Mammary epithelial cell (primary cell): ENCODE measurements at regions of chr7 and their contacts with region 1.

Region 1: DNA sequence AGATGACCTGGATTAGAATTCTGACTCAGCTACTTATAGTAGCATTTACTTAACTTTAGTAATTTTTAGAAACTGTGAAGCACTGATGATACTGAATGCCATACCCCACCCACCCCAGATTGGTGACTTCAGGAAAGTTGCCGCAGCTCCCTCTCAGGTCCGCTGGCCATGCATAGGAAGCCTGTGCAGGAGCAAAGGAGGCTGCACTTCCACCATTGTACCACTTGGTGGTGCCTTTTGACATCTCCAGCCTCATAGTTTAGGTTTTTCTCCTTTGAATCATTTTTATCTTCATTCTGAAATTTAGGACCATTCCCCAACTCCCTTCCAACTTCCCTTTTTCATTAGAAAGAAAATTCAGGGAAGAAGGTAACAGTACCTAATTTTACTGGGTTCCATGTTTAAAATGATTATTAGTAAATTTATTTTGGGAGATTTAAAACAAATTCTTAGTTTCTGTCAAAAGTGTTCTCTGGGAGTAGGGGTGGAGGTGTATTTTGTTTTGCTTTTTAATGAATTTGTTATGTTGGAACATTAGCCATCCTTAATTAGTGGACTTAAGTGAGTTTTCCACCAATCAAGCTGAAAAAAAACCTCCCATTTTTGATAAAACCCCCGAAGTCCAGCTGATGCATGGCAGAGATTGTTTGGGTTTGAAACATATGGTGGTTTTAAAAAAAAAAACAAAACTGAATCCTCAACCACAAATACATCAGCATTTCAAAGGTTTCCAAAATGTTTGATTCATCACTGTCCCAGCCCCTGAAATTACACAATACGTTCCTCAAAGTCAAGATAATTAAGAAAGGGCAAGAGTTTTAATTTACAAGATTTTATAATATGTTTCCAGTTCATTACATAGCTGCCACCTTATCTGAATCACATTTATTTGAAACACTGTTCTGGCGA is 109.6 kb downstream of the WNT2 start:
- DNase-seq: peak; percentile 38
- H3K4me3 ChIP-seq: no peak overlapping the region
- H3K27ac ChIP-seq: no peak overlapping the region
- H3K4me1 ChIP-seq: no peaks in the 10 kb centered on the region
- H3K27me3 ChIP-seq: no peaks in the 10 kb centered on the region
- CTCF ChIP-seq: peak; percentile 92 to 98

Region 2: DNA sequence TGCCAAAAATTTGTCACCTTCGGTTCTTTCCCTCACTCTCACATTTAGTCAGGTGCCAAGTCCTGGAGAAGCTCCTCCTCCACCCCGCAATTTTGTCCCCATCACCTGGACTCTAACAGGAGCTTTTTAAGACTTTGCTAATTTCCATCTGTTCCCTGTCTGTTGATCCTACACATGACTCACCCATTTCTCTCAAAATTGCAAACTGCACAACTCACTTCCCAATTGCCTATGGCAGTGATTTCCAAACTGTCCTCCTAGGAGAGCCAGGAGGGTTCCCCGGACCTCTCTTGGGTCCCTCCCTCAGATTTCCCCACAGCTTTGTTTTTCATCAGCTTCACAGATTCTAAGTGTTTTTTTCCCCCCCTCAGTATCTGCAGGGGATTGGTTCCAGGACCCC is 10.7 kb before region 1 on chr7:
- CTCF ChIA-PET with region 1: no interaction called
- dilution Hi-C with region 1: no loop called
- in situ Hi-C with region 1: no loop called
- intact Hi-C with region 1: no loop called
- DNase-seq: peak; percentile 12
- H3K4me3 ChIP-seq: no peak overlapping the region
- H3K27ac ChIP-seq: no peak overlapping the region
- H3K4me1 ChIP-seq: no peaks in the 10 kb centered on the region
- H3K27me3 ChIP-seq: no peaks in the 10 kb centered on the region
- CTCF ChIP-seq: no peak

Region 3: GRCh38 chr7:117338020-117338419 is 124.8 kb after region 1 on chr7:
- CTCF ChIA-PET with region 1: interaction called, 4 read pairs
- dilution Hi-C with region 1: no loop called
- in situ Hi-C with region 1: no loop called
- intact Hi-C with region 1: loop called (anchors 1 kb)
- DNase-seq: no peak
- H3K4me3 ChIP-seq: no peak overlapping the region
- H3K27ac ChIP-seq: no peak overlapping the region
- H3K4me1 ChIP-seq: no peaks in the 10 kb centered on the region
- H3K27me3 ChIP-seq: peaks cover 5% of the 10 kb centered on the region
- CTCF ChIP-seq: no peak

Region 4: DNA sequence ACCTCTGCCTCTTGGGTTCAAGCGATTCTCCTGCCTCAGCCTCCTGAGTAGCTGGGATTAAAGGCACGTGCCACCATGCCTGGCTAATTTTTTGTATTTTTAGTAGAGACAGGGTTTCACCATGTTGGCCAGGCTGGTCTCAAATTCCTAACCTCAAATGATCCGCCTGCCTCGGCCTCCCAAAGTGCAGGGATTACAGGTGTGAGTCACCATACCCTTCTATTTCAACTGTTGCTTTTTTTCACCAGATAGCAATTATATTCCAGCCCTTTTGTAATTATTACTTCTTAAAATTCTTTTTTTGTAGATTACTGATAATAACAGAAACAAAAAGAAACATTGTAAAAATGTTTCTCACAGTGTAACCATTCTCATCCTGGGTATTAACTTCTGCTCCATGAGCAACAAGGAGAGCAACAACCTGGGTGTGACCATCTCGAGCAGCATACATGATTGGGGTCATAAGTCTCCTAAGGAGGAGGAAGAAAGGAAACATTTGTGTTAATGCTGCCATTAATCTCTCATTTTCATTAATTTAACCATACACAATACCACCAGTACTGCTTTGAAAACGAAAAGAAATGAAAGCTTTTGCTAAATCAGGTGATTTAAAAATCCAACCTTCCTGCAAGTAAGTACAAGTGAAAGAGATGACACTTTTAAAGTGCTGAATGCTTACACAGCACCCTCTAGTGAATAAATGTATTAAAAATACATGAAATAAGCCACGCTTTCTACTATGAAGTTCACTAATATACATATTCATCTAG is 172.3 kb after region 1 on chr7:
- CTCF ChIA-PET with region 1: no interaction called
- dilution Hi-C with region 1: no loop called
- in situ Hi-C with region 1: loop called (anchors 10 kb)
- intact Hi-C with region 1: loop called (anchors 1 kb)
- DNase-seq: peak; percentile 19
- H3K4me3 ChIP-seq: no peak overlapping the region
- H3K27ac ChIP-seq: no peak overlapping the region
- H3K4me1 ChIP-seq: no peaks in the 10 kb centered on the region
- H3K27me3 ChIP-seq: no peaks in the 10 kb centered on the region
- CTCF ChIP-seq: peak in 1 of 2 donors; percentile 54